ENCODE measurements at regions of chr3 and their contacts with region 1.

Region 1: GRCh38 chr3:46909535-46910442 is 32.3 kb downstream of the PTH1R start:
- DNase-seq: peak; percentile 89

Region 2: GRCh38 chr3:46866720-46867549 is 42.9 kb before region 1 on chr3:
- intact Hi-C with region 1: loop called (anchors 1 kb)
- DNase-seq: peak; percentile 92

Measured in cardiac septum (tissue), 1 donor.